ENCODE measurements at regions of chr5 and their contacts with region 1.

Region 1: GRCh38 chr5:36611520-36612274 is 5.3 kb downstream of the SLC1A3 start:
- DNase-seq: peak in 8 of 42 donors; percentile 24 to 59 (median 42)

Region 2: DNA sequence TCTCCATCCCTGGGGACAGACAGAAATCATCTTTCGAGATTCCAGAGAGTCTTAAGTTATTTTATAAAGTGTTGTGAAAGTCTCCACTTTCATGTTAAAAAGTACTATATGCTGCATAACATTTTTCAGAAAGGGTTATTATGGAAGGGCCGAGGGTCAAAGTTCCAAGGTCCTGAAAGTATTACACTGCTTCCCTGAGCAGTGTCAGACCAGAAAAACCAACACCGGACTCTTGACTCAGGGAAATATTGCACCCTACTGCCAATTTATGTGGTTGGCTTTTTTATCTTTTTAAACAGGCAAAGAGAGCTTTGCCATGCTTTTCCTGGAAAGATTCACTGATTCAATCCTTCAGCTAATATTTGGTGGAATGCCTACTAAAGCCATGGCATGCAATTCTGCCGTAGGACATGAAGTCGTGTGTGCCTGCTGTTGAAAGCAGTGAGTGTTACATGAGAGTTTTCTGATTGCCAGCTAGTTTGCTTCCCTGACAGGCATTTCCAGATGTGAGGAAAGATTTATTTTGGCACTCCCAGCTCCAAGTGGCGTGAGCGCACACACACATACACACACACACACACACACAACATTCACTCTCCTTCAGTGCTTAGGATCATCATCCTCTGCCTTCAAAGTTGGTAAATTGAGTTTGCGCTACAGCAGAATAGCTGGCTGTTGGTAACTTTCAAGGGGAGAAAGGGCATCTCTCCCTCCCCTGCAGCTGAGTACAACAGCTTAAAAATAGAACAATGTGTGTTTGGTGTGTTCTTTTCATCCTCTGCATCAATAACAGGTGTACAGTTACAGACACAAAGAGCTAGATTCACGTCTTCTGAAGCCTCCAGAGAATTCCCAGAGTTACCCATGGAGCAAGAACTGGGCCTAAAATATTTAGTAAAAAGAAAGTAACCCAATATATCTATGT is 40.3 kb after region 1 on chr5:
- intact Hi-C with region 1: loop called (anchors 5 kb)
- DNase-seq: no peak

Region 3: DNA sequence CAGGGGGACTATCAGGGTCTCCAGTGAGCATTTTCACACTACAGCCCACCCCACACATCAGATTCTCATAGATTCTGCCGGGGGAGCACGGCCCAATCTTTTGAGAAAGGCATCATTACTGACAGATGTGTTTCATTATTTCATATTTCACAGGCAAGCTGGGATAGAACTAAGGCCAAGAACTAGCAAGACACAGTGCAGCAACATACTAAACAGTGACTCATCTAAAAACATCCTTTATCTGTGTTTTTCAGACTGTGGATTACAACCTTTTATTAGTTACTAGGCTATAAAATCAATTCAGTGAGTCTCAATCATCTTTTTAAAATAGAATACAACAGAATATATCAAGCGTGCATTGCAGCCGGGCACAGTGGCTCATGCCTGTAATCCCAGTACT is 577.7 kb after region 1 on chr5:
- intact Hi-C with region 1: no loop called
- DNase-seq: no peak